ENCODE measurements at regions of chr9 and their contacts with region 1.

Region 1: GRCh38 chr9:6305954-6306563 is 22.1 kb upstream of the TPD52L3 start:
- DNase-seq: no peak
- ATAC-seq: no peak
- H3K4me3 Mint-ChIP-seq: no peak overlapping the region
- H3K27ac Mint-ChIP-seq: no peak overlapping the region
- H3K4me1 Mint-ChIP-seq: 0 out of 2 replicates have a peak, but pooled peaks cover 4% of the 10 kb centered on the region
- H3K27me3 Mint-ChIP-seq: no peaks in the 10 kb centered on the region; the same call in 1 of the 2 replicates
- CTCF ChIP-seq: 0 out of 2 replicates have a peak, but pooled peaks have one; percentile 14

Region 2: DNA sequence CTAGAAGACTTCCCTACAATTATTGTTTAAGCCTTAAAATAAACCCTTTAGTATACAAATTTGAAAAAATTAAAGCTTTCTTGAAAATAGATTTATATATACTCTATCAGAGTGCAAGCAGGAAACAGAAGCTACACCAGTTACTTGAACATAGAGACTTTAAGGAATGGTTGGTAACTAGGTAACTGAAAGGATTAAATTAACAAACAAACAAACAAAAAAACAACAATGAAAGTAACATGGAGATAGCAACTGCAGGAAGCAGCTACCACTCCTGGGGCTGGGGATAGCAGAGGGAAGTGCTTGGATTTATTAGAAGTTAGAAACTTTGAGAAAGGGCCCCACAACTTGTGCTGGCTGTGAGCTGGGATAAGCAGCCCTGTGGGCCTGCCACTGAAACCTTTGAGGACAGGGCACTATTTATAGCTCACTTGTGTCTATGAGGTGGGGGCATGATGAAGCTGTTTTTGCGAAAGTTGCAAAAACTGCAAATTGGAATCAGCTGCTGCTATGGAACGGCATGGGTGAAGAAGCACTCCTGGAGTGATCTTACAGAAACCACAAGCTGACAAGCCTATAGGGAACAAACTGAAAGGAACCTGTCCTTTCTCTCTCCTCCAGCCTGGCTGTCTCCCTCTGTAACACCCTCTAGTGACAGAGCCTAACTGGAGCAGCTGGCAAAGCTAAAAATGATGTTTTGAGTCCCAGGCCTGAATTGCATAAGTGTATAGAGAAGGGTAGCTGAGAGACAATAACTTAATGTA is 199.3 kb before region 1 on chr9:
- CTCF ChIA-PET with region 1: interaction called, 11 read pairs
- POLR2A ChIA-PET with region 1: no interaction called
- DNase-seq: peak; percentile 21
- ATAC-seq: peak; percentile 97
- H3K4me3 Mint-ChIP-seq: no peak overlapping the region
- H3K27ac Mint-ChIP-seq: peak overlapping the region; percentile 58; the same call in 1 of the 2 replicates
- H3K4me1 Mint-ChIP-seq: peaks cover 11% of the 10 kb centered on the region
- H3K27me3 Mint-ChIP-seq: no peaks in the 10 kb centered on the region
- CTCF ChIP-seq: no peak

Region 3: DNA sequence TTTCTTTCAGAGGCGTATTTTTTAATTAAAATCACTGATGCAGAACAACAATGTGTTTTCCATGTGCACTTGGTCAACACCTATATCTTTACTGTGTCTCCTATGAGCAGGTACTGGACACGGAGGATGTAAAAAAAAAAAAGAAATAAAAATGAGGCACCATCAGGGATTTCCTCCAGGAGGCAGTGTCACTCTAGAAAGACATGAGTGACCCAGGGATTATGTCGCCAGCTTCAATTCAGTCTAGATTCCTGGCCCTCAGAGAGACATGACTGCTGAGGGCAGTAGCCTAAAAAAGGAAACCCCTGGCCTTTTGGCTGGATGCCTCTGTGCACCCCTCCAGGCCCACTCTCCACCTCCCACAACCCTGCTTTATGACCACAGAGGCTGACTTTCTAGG is 108.7 kb before region 1 on chr9:
- CTCF ChIA-PET with region 1: interaction called, 79 read pairs
- POLR2A ChIA-PET with region 1: no interaction called
- DNase-seq: no peak
- ATAC-seq: peak; percentile 91
- H3K4me3 Mint-ChIP-seq: no peak overlapping the region
- H3K27ac Mint-ChIP-seq: no peak overlapping the region
- H3K4me1 Mint-ChIP-seq: peaks cover 5% of the 10 kb centered on the region
- H3K27me3 Mint-ChIP-seq: no peaks in the 10 kb centered on the region; the same call in 1 of the 2 replicates
- CTCF ChIP-seq: peak; percentile 52

Measured in WTC11 (cell line).